GM10248 (cell line): ENCODE measurements at regions of chr5 and their contacts with region 1.

Region 1: DNA sequence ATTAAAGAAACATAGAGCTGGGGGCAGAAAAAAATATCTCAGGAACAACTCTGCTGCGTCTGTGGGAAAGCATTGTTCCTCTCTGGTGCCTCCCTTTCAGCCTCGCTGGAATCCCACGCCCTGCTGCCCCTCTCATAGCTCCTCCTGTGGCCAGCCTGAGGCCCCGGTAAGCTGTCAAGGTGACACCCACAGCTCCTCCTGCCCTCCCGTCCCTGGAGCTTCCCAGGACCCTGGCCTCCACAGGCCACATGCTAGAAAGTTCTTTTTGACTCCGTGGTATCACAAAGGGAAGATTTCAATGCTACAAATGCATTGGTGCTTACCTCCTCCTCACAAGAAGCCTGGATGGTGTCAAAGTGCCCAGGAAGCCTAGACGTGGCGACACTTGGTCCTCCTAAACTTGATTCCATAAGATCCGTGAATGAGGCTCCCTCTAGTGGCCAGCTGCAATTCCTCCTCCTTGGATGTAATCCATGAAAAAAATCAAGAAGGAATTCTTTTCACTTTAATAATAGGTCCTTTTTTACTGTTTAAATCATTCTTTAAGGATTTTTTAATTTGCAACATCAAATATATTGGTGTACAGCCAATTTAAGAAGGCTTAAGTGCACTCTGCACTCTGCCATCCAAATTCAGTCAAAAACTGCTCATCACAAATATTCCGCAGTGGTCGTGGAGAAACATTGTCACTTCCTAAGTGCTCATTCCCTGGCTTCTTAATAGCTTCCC is 104.9 kb downstream of the CFAP90 start:
- DNase-seq: peak; percentile 40
- CTCF ChIP-seq: peak; percentile 83

Region 2: DNA sequence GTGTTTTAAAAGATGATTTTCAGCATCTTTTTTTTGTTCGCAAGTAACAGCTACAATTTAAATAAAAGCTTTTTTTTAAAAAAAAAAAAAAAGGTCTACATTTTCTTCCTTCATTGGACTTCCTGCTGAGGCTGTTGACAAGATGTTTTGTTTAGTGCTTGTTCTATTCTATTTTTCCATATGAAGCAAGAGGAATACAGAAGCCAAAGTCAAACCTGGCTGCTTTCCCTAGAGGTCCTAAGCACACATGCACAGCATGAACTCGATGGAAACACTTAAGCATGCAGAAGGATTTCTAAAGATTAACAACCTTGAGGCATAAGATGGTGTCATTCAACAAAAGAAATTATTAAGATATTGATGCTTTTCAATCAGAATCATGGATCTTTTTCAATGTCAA is 245.0 kb before region 1 on chr5:
- CTCF ChIA-PET with region 1: no interaction called
- POLR2A ChIA-PET with region 1: no interaction called
- DNase-seq: no peak
- CTCF ChIP-seq: no peak

Region 3: GRCh38 chr5:7686794-7687193 is 59.3 kb before region 1 on chr5:
- CTCF ChIA-PET with region 1: interaction called, 10 read pairs
- POLR2A ChIA-PET with region 1: no interaction called
- DNase-seq: no peak
- CTCF ChIP-seq: no peak